Activated naive CD4-positive, alpha-beta T cell treated with anti-CD3 and anti-CD28 coated beads for 36 hours (primary cell): ENCODE measurements at regions of chr16 and their contacts with region 1.

Region 1: DNA sequence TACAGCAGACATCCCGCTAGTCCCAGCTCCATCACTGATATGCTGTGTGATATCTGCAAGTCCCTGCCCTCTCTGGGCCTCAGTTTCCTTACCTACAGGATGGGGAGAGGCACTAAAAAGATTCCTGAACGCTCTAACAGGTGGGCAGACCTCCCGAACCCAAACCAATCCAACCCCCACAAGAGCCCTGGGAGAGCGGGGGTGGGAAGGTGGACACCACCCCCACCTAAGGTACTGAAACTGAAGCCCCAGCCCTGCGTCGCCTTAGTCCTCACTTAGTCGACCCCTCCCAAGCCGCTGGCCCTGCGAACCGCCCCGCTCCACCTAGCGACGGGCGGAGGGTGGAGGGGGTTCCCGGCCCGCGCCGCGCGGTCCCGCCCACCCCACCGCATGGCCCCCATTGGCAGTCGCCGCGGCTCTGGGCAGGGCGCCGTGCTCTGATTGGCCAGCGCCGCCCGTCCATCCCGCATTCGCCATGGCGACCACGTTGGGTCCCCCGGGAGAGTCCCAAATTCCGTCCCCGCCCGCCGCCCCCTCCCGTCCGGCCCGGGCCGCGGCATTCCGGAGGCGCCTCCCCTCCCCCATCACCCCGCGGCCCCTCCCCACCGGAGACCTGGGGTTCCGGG is 578 bp downstream of the CCDC102A start:
- DNase-seq: peak; percentile 97
- H3K4me3 Mint-ChIP-seq: peak overlapping the region; percentile 85
- H3K27ac Mint-ChIP-seq: peak overlapping the region; percentile 88
- H3K4me1 Mint-ChIP-seq: peaks cover 70% of the 10 kb centered on the region
- H3K27me3 Mint-ChIP-seq: no peaks in the 10 kb centered on the region

Region 2: GRCh38 chr16:56974549-56975300 is 561.1 kb before region 1 on chr16:
- CTCF ChIA-PET with region 1: no interaction called
- intact Hi-C with region 1: no loop called
- DNase-seq: no peak
- H3K4me3 Mint-ChIP-seq: no peak overlapping the region
- H3K27ac Mint-ChIP-seq: no peak overlapping the region
- H3K4me1 Mint-ChIP-seq: peaks cover 24% of the 10 kb centered on the region
- H3K27me3 Mint-ChIP-seq: no peaks in the 10 kb centered on the region

Region 3: DNA sequence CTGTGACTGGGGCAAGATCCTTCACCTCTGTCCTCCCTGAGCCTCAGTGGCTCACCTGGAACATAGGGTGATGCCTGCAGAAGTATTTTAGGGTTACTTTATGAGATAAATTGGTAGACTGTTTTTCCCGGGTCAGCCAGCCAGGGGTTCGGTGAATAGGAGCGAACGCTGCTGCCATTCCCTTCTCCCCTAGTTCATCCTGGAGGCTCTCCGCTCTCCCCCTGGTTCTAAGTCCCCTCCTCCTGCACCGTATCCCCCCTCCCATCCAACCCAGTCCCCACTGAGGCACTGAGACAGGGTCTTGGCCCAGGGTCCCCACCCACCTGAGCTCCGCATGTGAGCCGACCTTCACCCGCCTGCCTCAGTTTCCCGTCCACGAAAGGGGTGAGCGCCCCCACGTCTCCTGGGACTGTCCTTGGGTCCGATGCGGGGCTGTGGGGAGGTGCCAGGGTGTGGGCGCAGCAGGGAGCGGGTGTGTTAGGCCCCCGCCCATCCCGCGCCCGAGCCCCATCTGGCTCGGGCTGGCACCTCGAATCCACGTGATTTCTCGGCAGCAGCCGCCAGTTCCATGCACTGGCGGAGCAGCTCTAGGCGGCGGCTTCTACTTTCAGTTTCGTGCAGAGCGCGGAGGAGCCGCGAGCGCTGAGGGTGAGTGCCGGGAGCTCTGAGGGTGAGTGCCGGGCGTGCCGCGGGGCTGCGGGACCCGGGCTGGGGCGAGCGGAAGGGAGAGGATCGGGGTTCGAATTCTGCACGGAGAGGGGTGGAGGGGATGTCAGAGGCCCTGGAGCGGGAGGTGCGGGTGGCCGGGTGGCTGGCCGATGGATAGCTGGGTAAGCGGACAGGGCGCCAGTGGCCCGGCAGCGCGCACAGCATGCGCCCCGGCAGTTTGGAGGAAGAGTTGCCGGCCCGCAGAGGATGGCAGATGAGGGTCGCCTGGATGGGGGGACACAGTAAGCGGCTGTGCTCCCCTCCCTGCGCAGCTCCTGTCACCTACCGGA is 546.5 kb before region 1 on chr16 and contains the start of gene NLRC5:
- CTCF ChIA-PET with region 1: no interaction called
- intact Hi-C with region 1: loop called (anchors 5 kb)
- DNase-seq: peak; percentile 95
- H3K4me3 Mint-ChIP-seq: peak within 1 kb of the TSS; percentile 99
- H3K27ac Mint-ChIP-seq: peak within 1 kb of the TSS; percentile 100
- H3K4me1 Mint-ChIP-seq: peaks cover 73% of the 10 kb centered on the region
- H3K27me3 Mint-ChIP-seq: no peaks in the 10 kb centered on the region
- total RNA-seq, gene NLRC5: 104 to 119 TPM

Region 4: DNA sequence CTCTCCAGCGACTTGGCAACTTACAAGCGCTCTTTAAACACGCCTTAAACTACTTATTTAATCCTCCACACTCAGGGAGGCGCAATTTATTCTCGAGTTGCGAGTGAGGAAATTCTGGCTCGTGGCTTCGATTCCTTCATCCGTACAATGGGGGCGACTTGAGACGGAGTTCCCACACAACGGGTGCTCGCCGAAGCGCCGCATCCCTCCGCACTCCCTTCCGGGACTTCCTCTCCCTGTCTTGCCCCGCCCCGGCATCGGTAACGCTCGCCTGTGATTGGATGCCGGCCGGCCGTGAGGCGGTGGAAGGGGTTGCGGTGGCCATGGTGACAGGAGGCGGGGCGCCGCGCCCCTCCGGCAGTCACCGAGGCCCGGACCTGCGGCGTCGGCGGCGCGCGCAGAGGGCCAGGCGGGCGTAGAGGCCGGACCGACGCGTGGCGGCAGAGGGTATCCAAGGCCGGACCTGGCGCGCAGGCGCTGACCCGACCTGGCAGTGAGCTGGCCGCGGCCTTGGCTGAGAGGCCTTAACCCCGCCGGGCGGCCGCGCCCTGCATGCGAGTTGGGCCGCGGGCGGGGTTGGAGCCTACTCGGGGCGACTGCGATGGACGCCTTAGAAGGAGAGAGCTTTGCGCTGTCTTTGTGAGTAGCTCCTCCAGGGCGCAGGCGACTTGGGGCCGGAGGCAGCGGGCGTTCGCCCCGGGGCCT is 290.9 kb before region 1 on chr16 and contains the start of gene ARL2BP:
- CTCF ChIA-PET with region 1: no interaction called
- intact Hi-C with region 1: loop called (anchors 1 kb)
- DNase-seq: peak; percentile 98
- H3K4me3 Mint-ChIP-seq: peak within 1 kb of the TSS; percentile 93
- H3K27ac Mint-ChIP-seq: peak within 1 kb of the TSS; percentile 91
- H3K4me1 Mint-ChIP-seq: peaks cover 16% of the 10 kb centered on the region
- H3K27me3 Mint-ChIP-seq: no peaks in the 10 kb centered on the region
- total RNA-seq, gene ARL2BP: 11.0 to 11.2 TPM

Region 5: GRCh38 chr16:57475711-57476339 is 60.0 kb before region 1 on chr16:
- CTCF ChIA-PET with region 1: no interaction called
- intact Hi-C with region 1: loop called (anchors 1 kb)
- DNase-seq: peak; percentile 96
- H3K4me3 Mint-ChIP-seq: no peak overlapping the region
- H3K27ac Mint-ChIP-seq: peak overlapping the region; percentile 63
- H3K4me1 Mint-ChIP-seq: peaks cover 22% of the 10 kb centered on the region
- H3K27me3 Mint-ChIP-seq: no peaks in the 10 kb centered on the region

Region 6: GRCh38 chr16:57591086-57591869 is 55.5 kb after region 1 on chr16:
- CTCF ChIA-PET with region 1: no interaction called
- intact Hi-C with region 1: loop called (anchors 1 kb)
- DNase-seq: peak; percentile 89
- H3K4me3 Mint-ChIP-seq: peak overlapping the region; percentile 40
- H3K27ac Mint-ChIP-seq: peak overlapping the region; percentile 90
- H3K4me1 Mint-ChIP-seq: peaks cover 32% of the 10 kb centered on the region
- H3K27me3 Mint-ChIP-seq: no peaks in the 10 kb centered on the region

Region 7: GRCh38 chr16:57616871-57617270 is 81.1 kb after region 1 on chr16:
- CTCF ChIA-PET with region 1: no interaction called
- intact Hi-C with region 1: no loop called
- DNase-seq: no peak
- H3K4me3 Mint-ChIP-seq: no peak overlapping the region
- H3K27ac Mint-ChIP-seq: no peak overlapping the region
- H3K4me1 Mint-ChIP-seq: peaks cover 11% of the 10 kb centered on the region
- H3K27me3 Mint-ChIP-seq: no peaks in the 10 kb centered on the region

Region 8: DNA sequence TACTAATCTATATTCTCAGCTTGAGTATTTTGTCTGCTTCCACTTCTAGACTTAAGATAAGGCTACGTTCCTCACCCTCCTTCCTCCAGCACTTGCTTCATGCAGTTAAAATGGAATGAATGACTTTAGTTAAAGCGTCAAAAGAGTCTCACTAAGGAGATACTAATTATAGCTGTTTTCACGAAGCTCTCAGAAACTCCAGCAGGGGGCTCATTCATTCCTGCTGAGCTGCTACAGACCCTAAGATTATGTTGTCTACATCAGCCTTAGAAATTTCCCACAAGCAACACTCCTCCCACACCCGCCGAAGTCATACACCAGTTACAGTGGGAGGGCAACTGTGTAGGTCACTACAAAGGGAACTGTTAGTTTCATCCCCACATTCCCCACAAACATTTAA is 323.5 kb after region 1 on chr16:
- CTCF ChIA-PET with region 1: no interaction called
- intact Hi-C with region 1: no loop called
- DNase-seq: no peak
- H3K4me3 Mint-ChIP-seq: no peak overlapping the region
- H3K27ac Mint-ChIP-seq: no peak overlapping the region
- H3K4me1 Mint-ChIP-seq: no peaks in the 10 kb centered on the region
- H3K27me3 Mint-ChIP-seq: peaks cover 16% of the 10 kb centered on the region

Region 9: DNA sequence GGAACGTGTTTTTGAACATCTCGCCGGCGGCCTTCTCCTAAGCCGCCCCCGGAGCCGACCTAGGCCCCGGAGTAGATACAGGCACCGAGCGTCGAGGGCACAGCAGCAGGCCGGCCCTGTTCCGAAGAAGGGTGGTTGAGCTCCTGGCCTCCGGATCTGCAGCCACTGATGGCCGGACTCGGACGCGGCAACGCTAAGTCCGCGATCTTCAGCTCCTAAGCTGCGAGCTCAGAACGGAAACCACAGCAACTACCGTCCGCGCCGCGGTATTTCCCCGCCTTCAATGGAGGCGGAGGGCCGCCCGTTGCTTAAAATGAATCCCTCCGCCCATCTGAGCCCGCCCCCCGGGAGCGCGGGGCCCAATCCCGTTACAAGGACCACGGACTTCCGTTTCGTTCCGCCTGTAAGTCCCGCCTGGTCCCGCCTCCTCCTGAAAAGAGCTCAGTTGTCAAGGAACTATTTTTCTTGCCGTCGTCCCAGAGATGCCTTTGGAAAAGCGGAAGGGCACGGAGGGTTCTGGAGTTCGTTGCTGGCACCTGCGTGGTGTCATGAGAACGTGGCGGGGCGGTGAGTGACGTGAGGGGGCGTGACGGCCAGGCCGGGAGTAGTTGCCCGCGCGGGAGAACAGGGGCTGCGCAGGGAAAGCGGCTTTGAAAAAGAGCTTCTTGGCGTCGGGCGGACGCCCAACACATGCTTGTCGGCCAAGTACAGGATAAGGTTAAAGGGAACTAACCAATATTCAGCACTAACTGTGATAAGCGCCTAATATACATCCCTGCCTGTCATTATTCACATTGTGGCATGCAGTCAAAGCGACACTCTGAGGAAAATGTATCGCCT is 593.5 kb after region 1 on chr16 and contains the start of gene CFAP20:
- CTCF ChIA-PET with region 1: no interaction called
- intact Hi-C with region 1: loop called (anchors 10 kb)
- DNase-seq: peak; percentile 98
- H3K4me3 Mint-ChIP-seq: peak within 1 kb of the TSS; percentile 96
- H3K27ac Mint-ChIP-seq: peak within 1 kb of the TSS; percentile 91
- H3K4me1 Mint-ChIP-seq: peaks cover 40% of the 10 kb centered on the region
- H3K27me3 Mint-ChIP-seq: no peaks in the 10 kb centered on the region
- total RNA-seq, gene CFAP20: 31.2 to 31.4 TPM